H1 (cell line): ENCODE measurements at regions of chr1 and their contacts with region 1.

Region 1: GRCh38 chr1:165697881-165698760 is at the start of gene ALDH9A1:
- DNase-seq: peak; percentile 66 to 88
- H3K4me3 ChIP-seq: peak within 1 kb of the TSS; percentile 93 to 99 (median 94)
- H3K27ac ChIP-seq: peak within 1 kb of the TSS; percentile 63
- H3K4me1 ChIP-seq: peaks cover 0 to 3% (median 0%) of the 10 kb centered on the region in 4 experiments; a peak in 1 of 7 replicates
- H3K27me3 ChIP-seq: no peaks in the 10 kb centered on the region
- CTCF ChIP-seq: peak in 2 of 3 experiments; percentile 14 to 40; a peak in 2 of 4 replicates
- EP300 ChIP-seq: no peak
- POLR2A ChIP-seq: peak; percentile 56 to 81
- RAD21 ChIP-seq: 0 out of 4 replicates have a peak, but pooled peaks of 1 of the 2 experiments have one; percentile 2
- total RNA-seq, gene ALDH9A1: 57.6 and 62.7 TPM in 2 replicates

Region 2: DNA sequence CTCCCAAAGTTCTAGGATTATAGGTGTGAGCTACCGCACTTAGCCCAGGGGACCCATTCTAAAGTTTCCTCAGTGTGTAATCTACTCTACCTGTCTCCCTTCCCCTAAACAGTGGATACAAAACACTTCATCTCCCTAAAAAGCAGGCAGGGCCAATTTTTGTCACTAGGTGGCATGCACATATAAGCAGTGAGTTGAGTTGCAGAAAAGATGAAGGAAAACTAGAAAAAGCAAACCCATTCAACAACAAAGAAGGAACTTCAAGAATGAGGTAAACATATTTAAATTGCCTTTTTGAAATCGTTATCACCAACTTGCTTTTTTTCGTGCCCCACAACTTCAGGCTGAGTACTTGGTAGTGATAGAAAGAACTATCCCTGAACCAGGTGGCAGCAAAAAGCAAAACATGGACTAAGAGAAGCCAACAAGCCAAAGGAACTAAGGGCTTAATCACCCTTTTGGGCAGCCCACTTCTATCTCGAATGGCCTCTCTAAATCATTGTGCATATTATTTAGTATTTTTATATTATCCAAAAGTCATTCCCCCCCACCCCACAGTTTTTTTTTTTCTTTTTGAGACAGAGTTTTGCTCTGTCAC is 19.9 kb after region 1 on chr1:
- CTCF ChIA-PET with region 1: no interaction called
- POLR2A ChIA-PET with region 1: no interaction called
- DNase-seq: peak in 1 of 2 experiments; percentile 64
- H3K4me3 ChIP-seq: no peak overlapping the region
- H3K27ac ChIP-seq: no peak overlapping the region
- H3K4me1 ChIP-seq: peaks cover 0 to 2% (median 0%) of the 10 kb centered on the region in 4 experiments; a peak in 1 of 7 replicates
- H3K27me3 ChIP-seq: no peaks in the 10 kb centered on the region
- CTCF ChIP-seq: peak in 2 of 3 experiments; percentile 67 to 85; a peak in 3 of 4 replicates
- EP300 ChIP-seq: no peak
- POLR2A ChIP-seq: no peak
- RAD21 ChIP-seq: peak; percentile 93 to 95

Region 3: DNA sequence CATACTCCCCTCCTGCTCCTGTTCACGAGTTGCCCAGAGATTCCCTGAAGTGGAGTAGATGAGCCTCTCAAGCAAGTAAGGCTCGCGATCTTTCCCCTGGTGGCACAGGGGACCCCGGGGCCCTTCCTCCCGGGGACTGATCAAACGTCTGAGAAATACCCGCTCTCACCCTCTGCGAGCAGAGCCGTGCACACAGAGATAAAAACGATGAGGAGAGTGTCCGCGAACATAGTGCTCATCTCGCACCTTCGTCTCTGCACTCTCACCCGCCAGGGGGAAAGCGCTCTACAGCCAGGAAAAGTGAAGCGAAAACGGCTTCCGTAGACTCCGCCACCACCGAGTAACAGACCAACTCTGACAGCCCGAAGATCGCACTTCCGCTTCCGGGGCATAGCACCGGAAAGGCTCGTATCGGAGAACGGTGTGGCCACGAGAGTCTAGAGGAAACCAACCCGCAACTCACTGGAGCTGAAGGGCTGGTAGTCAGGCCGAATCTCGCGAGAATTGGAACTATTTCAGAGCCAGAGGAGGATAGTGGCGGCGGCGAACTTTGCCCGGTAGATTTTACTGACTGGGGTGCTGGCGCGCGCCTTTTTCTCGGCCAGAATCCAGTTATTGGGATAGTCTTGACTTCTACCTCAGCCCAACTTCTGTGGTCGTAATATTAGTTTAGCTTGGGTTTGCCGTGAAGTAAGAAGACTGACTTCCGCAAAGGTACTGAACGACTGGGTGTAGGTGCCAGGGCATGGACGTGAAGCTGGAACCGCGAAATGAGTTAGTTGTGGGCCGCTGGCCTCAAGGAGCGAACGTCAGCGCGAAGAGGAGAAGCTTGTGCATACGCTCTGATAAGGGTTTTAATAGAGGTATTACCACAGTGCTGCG is 70.6 kb after region 1 on chr1 and contains the start of gene TMCO1:
- CTCF ChIA-PET with region 1: no interaction called
- POLR2A ChIA-PET with region 1: interaction called, 12 read pairs
- DNase-seq: peak; percentile 83 to 89
- H3K4me3 ChIP-seq: peak within 1 kb of the TSS; percentile 65 to 93 (median 82)
- H3K27ac ChIP-seq: peak within 1 kb of the TSS; percentile 78
- H3K4me1 ChIP-seq: peaks cover 0 to 2% (median 0%) of the 10 kb centered on the region in 4 experiments; a peak in 1 of 7 replicates
- H3K27me3 ChIP-seq: no peaks in the 10 kb centered on the region
- CTCF ChIP-seq: no peak
- EP300 ChIP-seq: no peak
- POLR2A ChIP-seq: peak; percentile 66 to 96
- RAD21 ChIP-seq: peak in 1 of 2 experiments; percentile 16; a peak in 1 of 4 replicates
- total RNA-seq, gene TMCO1: 53.1 and 61.6 TPM in 2 replicates